Dendritic cell treated with granulocyte-macrophage colony-stimulating factor and Interleukin-4, amounts not matched to agents 40 ng/mL and 50 ng/mL, for 4 days (primary cell): ENCODE measurements at regions of chr7 and their contacts with region 1.

Region 1: GRCh38 chr7:12549106-12549505 is 21.4 kb upstream of the SCIN start:
- H3K4me3 Mint-ChIP-seq: no peak overlapping the region
- H3K27ac Mint-ChIP-seq: no peak overlapping the region
- H3K4me1 Mint-ChIP-seq: no peaks in the 10 kb centered on the region
- H3K27me3 Mint-ChIP-seq: no peaks in the 10 kb centered on the region

Region 2: GRCh38 chr7:12584930-12585329 is 35.8 kb after region 1 on chr7:
- intact Hi-C with region 1: loop called (anchors 2 kb)
- H3K4me3 Mint-ChIP-seq: peak overlapping the region; percentile 17
- H3K27ac Mint-ChIP-seq: peak overlapping the region; percentile 61
- H3K4me1 Mint-ChIP-seq: peaks cover 21% of the 10 kb centered on the region
- H3K27me3 Mint-ChIP-seq: peaks cover 2% of the 10 kb centered on the region

Region 3: GRCh38 chr7:13898967-13899670 is 1350.0 kb after region 1 on chr7:
- intact Hi-C with region 1: no loop called
- H3K4me3 Mint-ChIP-seq: no peak overlapping the region
- H3K27ac Mint-ChIP-seq: no peak overlapping the region
- H3K4me1 Mint-ChIP-seq: peaks cover 18% of the 10 kb centered on the region
- H3K27me3 Mint-ChIP-seq: peaks cover 5% of the 10 kb centered on the region